ENCODE measurements at regions of chr17 and their contacts with region 1.

Region 1: GRCh38 chr17:28571255-28572122 is at the start of gene PIGS:
- DNase-seq: peak; percentile 68
- ATAC-seq: peak; percentile 97
- H3K4me3 ChIP-seq: peak within 1 kb of the TSS; percentile 90
- H3K27ac ChIP-seq: peak within 1 kb of the TSS; percentile 85
- H3K4me1 ChIP-seq: peaks cover 22% of the 10 kb centered on the region
- H3K27me3 ChIP-seq: no peaks in the 10 kb centered on the region
- CTCF ChIP-seq: no peak
- EP300 ChIP-seq: no peak
- POLR2A ChIP-seq: peak; percentile 94
- RAD21 ChIP-seq: no peak
- polyA plus RNA-seq, gene PIGS: 27.5 to 32.2 TPM

Region 2: GRCh38 chr17:28500712-28501379 is 70.6 kb before region 1 on chr17:
- CTCF ChIA-PET with region 1: interaction called, 4 read pairs
- POLR2A ChIA-PET with region 1: interaction called, 19 read pairs
- RAD21 ChIA-PET with region 1: interaction called, 4 read pairs
- SMC1A ChIA-PET with region 1: interaction called, 3 read pairs
- in situ Hi-C with region 1: no loop called
- intact Hi-C with region 1: no loop called
- DNase-seq: peak; percentile 63
- ATAC-seq: peak; percentile 93
- H3K4me3 ChIP-seq: peak overlapping the region; percentile 59
- H3K27ac ChIP-seq: peak overlapping the region; percentile 87
- H3K4me1 ChIP-seq: peaks cover 26% of the 10 kb centered on the region
- H3K27me3 ChIP-seq: no peaks in the 10 kb centered on the region
- CTCF ChIP-seq: no peak
- EP300 ChIP-seq: no peak
- POLR2A ChIP-seq: peak; percentile 47; the same call in 1 of the 2 replicates
- RAD21 ChIP-seq: no peak

Region 3: DNA sequence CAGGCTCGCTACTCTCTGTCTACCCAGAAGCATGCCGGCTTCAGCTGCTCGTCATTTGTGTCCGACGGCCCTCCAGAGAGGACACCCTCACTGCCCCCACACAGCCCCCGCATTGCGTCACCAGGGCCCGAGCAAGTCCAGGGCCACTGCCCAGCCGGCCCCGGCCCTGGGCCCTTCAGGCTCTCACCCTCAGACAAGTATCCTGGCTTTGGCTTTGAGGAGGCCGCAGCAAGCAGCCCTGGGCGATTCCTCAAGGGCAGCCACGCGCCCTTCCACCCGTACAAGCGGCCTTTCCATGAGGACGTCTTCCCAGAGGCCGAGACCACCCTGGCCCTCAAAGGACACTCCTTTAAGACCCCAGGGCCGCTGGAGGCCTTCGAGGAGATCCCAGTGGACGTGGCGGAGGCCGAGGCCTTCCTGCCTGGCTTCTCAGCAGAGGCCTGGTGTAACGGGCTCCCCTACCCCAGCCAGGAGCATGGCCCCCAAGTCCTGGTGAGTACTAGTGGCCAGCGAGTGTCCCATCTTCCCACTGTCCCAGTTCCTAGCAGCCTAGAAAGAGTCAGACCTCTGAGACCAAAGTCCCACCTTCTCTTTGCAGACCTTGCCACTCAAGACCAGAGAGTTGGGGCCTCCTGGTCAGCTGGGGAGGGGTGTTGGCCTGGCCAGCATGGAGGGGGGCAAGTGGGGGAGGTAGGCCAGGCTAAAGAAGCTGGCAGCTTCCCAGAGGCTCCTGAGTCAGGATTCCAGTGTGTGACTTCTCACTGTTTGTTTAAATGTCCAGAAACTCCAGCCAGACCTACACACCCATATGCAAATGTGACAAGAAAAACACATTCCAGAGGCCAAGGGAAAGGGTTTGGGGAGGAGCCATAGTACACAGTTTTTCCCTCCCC is 46.8 kb before region 1 on chr17:
- CTCF ChIA-PET with region 1: no interaction called
- POLR2A ChIA-PET with region 1: no interaction called
- RAD21 ChIA-PET with region 1: no interaction called
- SMC1A ChIA-PET with region 1: no interaction called
- in situ Hi-C with region 1: no loop called
- intact Hi-C with region 1: no loop called
- DNase-seq: no peak
- ATAC-seq: no peak
- H3K4me3 ChIP-seq: no peak overlapping the region
- H3K27ac ChIP-seq: no peak overlapping the region
- H3K4me1 ChIP-seq: no peaks in the 10 kb centered on the region
- H3K27me3 ChIP-seq: no peaks in the 10 kb centered on the region
- CTCF ChIP-seq: no peak
- EP300 ChIP-seq: no peak
- POLR2A ChIP-seq: no peak
- RAD21 ChIP-seq: no peak

Region 4: DNA sequence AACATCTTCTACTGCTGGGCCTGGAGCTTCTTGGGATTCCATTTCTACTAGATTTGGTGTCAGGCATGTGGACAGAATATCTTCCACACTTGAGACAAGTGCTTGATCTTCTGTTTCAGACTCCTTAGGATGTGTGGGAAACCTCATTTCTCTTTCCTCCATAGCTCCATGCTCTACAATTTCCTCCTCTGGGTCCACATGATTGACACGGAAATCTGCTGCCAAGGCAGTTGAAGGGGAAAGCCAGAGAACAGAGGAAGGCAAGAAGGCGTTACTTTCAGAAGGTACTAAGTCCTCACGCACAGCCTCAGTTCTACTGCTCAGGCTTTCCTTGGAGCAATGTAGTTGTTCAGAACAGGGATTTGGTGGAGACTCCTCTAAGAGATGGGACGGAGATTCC is 20.8 kb after region 1 on chr17:
- CTCF ChIA-PET with region 1: interaction called, 9 read pairs
- POLR2A ChIA-PET with region 1: interaction called, 91 read pairs
- RAD21 ChIA-PET with region 1: interaction called, 24 read pairs
- SMC1A ChIA-PET with region 1: interaction called, 25 read pairs
- in situ Hi-C with region 1: no loop called
- intact Hi-C with region 1: no loop called
- DNase-seq: no peak
- ATAC-seq: no peak
- H3K4me3 ChIP-seq: no peak overlapping the region
- H3K27ac ChIP-seq: no peak overlapping the region
- H3K4me1 ChIP-seq: no peaks in the 10 kb centered on the region
- H3K27me3 ChIP-seq: no peaks in the 10 kb centered on the region
- CTCF ChIP-seq: no peak
- EP300 ChIP-seq: no peak
- POLR2A ChIP-seq: no peak
- RAD21 ChIP-seq: no peak

Region 5: GRCh38 chr17:28598799-28599310 is 27.4 kb after region 1 on chr17 and contains the start of gene SPAG5:
- CTCF ChIA-PET with region 1: interaction called, 9 read pairs
- POLR2A ChIA-PET with region 1: interaction called, 91 read pairs
- RAD21 ChIA-PET with region 1: interaction called, 24 read pairs
- SMC1A ChIA-PET with region 1: interaction called, 25 read pairs
- in situ Hi-C with region 1: no loop called
- intact Hi-C with region 1: loop called (anchors 2 kb)
- DNase-seq: peak; percentile 80
- ATAC-seq: peak; percentile 95
- H3K4me3 ChIP-seq: peak within 1 kb of the TSS; percentile 98
- H3K27ac ChIP-seq: peak within 1 kb of the TSS; percentile 94
- H3K4me1 ChIP-seq: peaks cover 5% of the 10 kb centered on the region
- H3K27me3 ChIP-seq: no peaks in the 10 kb centered on the region
- CTCF ChIP-seq: no peak
- EP300 ChIP-seq: no peak
- POLR2A ChIP-seq: peak; percentile 95
- RAD21 ChIP-seq: no peak
- polyA plus RNA-seq, gene SPAG5: 73.5 to 139 TPM

Region 6: GRCh38 chr17:28612936-28613872 is 41.7 kb after region 1 on chr17:
- CTCF ChIA-PET with region 1: interaction called, 11 read pairs
- POLR2A ChIA-PET with region 1: interaction called, 5 read pairs
- RAD21 ChIA-PET with region 1: interaction called, 12 read pairs
- SMC1A ChIA-PET with region 1: interaction called, 5 read pairs
- in situ Hi-C with region 1: no loop called
- intact Hi-C with region 1: no loop called
- DNase-seq: no peak
- ATAC-seq: peak; percentile 87
- H3K4me3 ChIP-seq: no peak overlapping the region
- H3K27ac ChIP-seq: no peak overlapping the region; the same call in 1 of the 2 replicates
- H3K4me1 ChIP-seq: no peaks in the 10 kb centered on the region; the same call in none of the 2 replicates
- H3K27me3 ChIP-seq: no peaks in the 10 kb centered on the region
- CTCF ChIP-seq: peak; percentile 62 to 75 (median 69)
- EP300 ChIP-seq: no peak
- POLR2A ChIP-seq: 0 out of 2 replicates have a peak, but pooled peaks have one; percentile 5
- RAD21 ChIP-seq: peak; percentile 69

Region 7: DNA sequence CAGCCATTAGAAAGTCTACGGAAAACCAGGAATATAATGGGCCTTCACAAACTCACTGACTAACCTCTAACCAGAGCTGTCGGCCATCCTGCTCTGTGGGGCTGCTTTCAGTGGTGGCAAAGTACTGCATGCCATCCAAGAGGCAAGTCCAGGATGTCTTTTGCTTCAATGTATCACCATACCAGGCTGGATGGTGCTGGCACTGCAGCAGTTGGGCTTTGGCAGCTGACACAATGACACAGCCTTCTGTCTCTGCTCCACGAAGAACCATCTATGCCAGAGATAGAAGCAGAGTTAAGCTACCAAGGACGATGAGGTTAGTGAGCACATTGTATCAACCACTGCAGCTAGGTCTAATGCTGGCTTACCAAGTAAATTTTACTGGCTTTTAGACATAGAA is 52.2 kb after region 1 on chr17:
- CTCF ChIA-PET with region 1: no interaction called
- POLR2A ChIA-PET with region 1: interaction called, 4 read pairs
- RAD21 ChIA-PET with region 1: no interaction called
- SMC1A ChIA-PET with region 1: no interaction called
- in situ Hi-C with region 1: no loop called
- intact Hi-C with region 1: loop called (anchors 5 kb)
- DNase-seq: no peak
- ATAC-seq: no peak
- H3K4me3 ChIP-seq: no peak overlapping the region
- H3K27ac ChIP-seq: no peak overlapping the region
- H3K4me1 ChIP-seq: no peaks in the 10 kb centered on the region
- H3K27me3 ChIP-seq: no peaks in the 10 kb centered on the region
- CTCF ChIP-seq: no peak
- EP300 ChIP-seq: no peak
- POLR2A ChIP-seq: no peak
- RAD21 ChIP-seq: no peak

Measured in GM12878 (cell line).